Activated naive CD4-positive, alpha-beta T cell treated with anti-CD3 and anti-CD28 coated beads for 36 hours (primary cell): ENCODE measurements at regions of chr9 and their contacts with region 1.

Region 1: GRCh38 chr9:5510360-5510931 is at the start of gene PDCD1LG2:
- DNase-seq: peak; percentile 59
- H3K4me3 Mint-ChIP-seq: peak within 1 kb of the TSS; percentile 27
- H3K27ac Mint-ChIP-seq: peak within 1 kb of the TSS; percentile 54
- H3K4me1 Mint-ChIP-seq: peaks cover 31% of the 10 kb centered on the region
- H3K27me3 Mint-ChIP-seq: no peaks in the 10 kb centered on the region
- total RNA-seq, gene PDCD1LG2: 0.10 TPM in 1 of 2 experiments, not detected in the other

Region 2: GRCh38 chr9:5364294-5365024 is 146.0 kb before region 1 on chr9:
- CTCF ChIA-PET with region 1: no interaction called
- intact Hi-C with region 1: loop called (anchors 1 kb)
- DNase-seq: peak; percentile 22
- H3K4me3 Mint-ChIP-seq: no peak overlapping the region
- H3K27ac Mint-ChIP-seq: peak overlapping the region; percentile 35
- H3K4me1 Mint-ChIP-seq: peaks cover 25% of the 10 kb centered on the region
- H3K27me3 Mint-ChIP-seq: no peaks in the 10 kb centered on the region

Region 3: DNA sequence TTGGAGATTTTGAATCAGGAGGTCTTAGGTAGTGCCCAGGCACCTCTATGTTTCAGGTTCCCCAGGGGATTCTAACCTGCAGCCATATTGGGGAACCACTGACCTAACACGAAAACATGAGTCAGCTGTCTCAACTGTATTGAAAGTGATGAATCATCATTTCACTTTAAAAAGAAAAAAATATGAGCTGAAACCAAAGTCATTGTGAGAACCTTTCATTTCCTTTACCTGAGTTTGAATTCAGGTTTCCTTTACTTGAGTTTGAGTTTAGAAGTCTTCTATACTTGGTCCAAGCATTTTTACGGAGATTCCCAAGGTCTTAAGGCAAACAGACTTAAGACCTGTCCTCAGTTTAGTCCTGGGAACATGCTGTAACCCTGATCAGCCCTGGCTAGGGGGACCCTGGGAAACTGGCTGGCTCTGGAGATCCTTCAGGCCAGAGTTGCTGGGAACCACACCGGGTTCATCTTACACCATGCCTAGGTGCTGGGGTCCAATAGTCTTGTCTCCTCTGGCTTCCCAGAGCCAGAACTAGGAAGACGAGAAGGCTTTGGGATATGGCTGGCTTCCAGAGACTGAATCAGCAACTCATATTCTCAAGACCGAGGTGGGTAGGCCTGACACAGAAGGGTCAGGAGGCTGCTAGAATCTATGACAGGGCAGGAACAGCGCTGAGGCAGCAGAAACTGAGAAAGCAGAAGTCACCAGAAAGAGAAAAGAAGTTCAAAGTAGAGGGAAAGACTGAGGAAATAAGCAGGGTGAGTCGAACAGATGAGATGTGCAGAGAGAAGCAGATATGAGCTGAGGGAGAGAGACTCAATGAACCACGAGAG is 16.6 kb before region 1 on chr9:
- CTCF ChIA-PET with region 1: interaction called, 6 read pairs
- intact Hi-C with region 1: loop called (anchors 1 kb)
- DNase-seq: peak; percentile 39
- H3K4me3 Mint-ChIP-seq: no peak overlapping the region
- H3K27ac Mint-ChIP-seq: peak overlapping the region; percentile 48
- H3K4me1 Mint-ChIP-seq: peaks cover 17% of the 10 kb centered on the region
- H3K27me3 Mint-ChIP-seq: no peaks in the 10 kb centered on the region

Region 4: GRCh38 chr9:5562806-5563416 is 52.5 kb after region 1 on chr9:
- CTCF ChIA-PET with region 1: interaction called, 3 read pairs
- intact Hi-C with region 1: loop called (anchors 2 kb)
- DNase-seq: no peak
- H3K4me3 Mint-ChIP-seq: no peak overlapping the region
- H3K27ac Mint-ChIP-seq: no peak overlapping the region
- H3K4me1 Mint-ChIP-seq: peaks cover 43% of the 10 kb centered on the region
- H3K27me3 Mint-ChIP-seq: no peaks in the 10 kb centered on the region

Region 5: DNA sequence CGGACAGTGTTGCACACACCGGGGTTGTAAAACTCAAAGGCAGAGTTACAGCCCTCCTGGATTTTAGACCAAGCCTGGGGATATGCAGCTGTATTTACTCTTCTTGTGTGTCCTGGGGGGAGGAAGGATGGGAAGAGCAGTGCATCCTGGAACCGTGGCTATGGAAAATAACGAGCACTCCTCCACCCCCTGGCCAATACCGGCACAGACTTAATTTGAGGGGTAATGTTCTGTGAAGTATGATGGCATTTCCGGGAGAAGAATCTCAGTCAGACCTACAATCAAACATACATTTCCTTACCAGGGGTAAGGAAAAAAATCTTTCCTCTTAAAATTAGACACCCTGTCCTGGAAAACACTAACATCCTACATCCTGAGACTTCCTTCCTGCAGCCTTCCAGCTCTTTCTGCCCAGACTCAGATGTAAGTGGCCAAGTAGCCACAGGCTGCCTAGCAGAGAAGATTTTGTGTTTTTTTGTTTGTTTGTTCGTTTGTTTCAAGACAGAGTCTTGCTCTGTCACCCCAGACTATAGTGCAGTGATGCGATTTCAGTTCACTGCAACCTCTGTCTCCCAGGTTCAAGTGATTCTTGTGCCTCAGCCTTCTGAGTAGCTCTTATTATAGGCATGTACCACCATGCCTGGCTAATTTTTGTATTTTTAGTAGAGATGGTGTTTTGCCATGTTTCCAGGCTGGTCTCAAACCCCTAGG is 333.5 kb after region 1 on chr9:
- CTCF ChIA-PET with region 1: no interaction called
- intact Hi-C with region 1: loop called (anchors 5 kb)
- DNase-seq: peak; percentile 39
- H3K4me3 Mint-ChIP-seq: peak overlapping the region; percentile 33
- H3K27ac Mint-ChIP-seq: peak overlapping the region; percentile 74
- H3K4me1 Mint-ChIP-seq: peaks cover 57% of the 10 kb centered on the region
- H3K27me3 Mint-ChIP-seq: no peaks in the 10 kb centered on the region